ENCODE measurements at regions of chr10 and their contacts with region 1.

Region 1: GRCh38 chr10:28984431-28984830 is 304.4 kb upstream of the LYZL1 start:
- DNase-seq: peak; percentile 84 to 97
- H3K4me3 ChIP-seq: no peak overlapping the region
- H3K27ac ChIP-seq: peak overlapping the region; percentile 43 to 47
- H3K4me1 ChIP-seq: peaks cover 0 to 18% of the 10 kb centered on the region in 2 donors
- H3K27me3 ChIP-seq: no peaks in the 10 kb centered on the region
- CTCF ChIP-seq: no peak

Region 2: DNA sequence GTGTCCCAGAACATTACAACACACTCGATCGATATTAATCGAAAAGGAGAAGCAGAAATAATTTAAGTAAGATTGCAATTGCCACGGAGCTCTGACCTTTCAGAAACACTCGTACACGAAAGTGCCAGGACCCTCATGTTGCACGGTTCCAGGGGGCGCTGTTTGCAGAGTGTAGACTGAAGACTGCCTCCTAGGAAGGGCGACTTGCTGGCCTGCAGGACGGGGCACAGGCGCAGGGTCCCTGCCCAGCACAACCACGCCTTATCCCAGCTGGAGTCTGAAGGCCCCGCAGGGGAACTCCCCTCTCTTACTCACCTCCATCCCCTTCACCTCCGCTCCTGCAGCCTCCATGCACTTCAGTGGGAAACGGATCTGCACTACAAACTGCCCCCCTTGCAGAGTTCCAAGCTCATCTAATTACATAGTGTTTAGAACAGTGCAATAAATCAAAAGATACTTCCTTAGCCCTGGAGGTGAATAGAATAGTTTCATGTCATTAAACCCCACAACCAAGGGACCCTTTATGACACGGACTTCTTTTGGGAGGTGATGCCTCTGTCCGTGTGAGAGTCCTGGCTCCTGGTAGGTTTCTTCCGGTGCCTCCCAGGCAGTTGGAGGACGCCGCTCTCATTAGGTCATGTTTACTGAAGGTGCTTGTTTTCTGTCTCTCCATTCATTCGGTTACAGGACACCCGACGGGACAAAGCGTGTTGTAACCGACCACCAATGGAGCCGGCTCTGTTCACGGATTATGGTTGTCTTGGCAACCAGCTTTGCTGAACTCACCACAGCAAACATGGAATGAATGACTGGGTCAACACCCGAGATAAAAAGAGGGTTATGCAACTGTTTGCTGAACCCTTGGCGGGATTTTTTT is 44.9 kb before region 1 on chr10:
- intact Hi-C with region 1: loop called (anchors 2 kb)
- DNase-seq: peak in 1 of 2 donors; percentile 90
- H3K4me3 ChIP-seq: peak overlapping the region in 1 of 2 donors; percentile 41
- H3K27ac ChIP-seq: no peak overlapping the region
- H3K4me1 ChIP-seq: peaks cover 0 to 12% of the 10 kb centered on the region in 2 donors
- H3K27me3 ChIP-seq: no peaks in the 10 kb centered on the region
- CTCF ChIP-seq: peak in 1 of 3 experiments; percentile 26

Region 3: DNA sequence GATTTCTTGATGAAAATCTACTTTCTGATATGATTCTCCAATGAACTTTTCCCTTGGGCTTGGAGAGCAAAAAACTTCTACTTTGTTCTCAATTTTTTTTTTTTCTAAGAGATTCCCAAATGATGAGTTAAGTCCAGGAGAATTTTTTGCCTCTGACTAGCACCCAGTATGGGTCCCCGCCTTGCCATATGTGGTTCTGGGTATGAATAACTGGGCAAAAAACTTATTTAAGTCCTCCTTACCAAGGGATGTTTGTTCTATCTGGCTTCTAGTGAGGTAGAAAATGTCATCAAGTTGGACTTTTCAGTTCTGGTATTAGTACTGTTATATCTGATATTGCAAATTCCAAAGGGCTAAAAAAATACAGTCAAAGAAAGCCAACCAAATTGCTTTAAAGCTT is 156.6 kb after region 1 on chr10:
- intact Hi-C with region 1: no loop called
- DNase-seq: no peak
- H3K4me3 ChIP-seq: no peak overlapping the region
- H3K27ac ChIP-seq: peak overlapping the region; percentile 8 to 58
- H3K4me1 ChIP-seq: peaks cover 0 to 6% of the 10 kb centered on the region in 2 donors
- H3K27me3 ChIP-seq: no peaks in the 10 kb centered on the region
- CTCF ChIP-seq: no peak

Measured in ascending aorta (tissue), 2 donors.